Prostate gland (tissue), 2 donors: ENCODE measurements at regions of chr2 and their contacts with region 1.

Region 1: GRCh38 chr2:197499594-197500526 is at the starts of genes HSPD1 and HSPE1:
- DNase-seq: peak; percentile 98
- H3K4me3 ChIP-seq: peak within 1 kb of the TSS; percentile 85 to 93
- H3K27ac ChIP-seq: peak within 1 kb of the TSS; percentile 99 to 100
- H3K4me1 ChIP-seq: no peaks in the 10 kb centered on the region
- H3K27me3 ChIP-seq: no peaks in the 10 kb centered on the region
- CTCF ChIP-seq: peak in 2 of 4 experiments; percentile 18 to 47
- POLR2A ChIP-seq: peak; percentile 99
- total RNA-seq, gene HSPD1: 95.5 to 110 TPM
- total RNA-seq, gene HSPE1: 57.0 to 139 TPM

Region 2: GRCh38 chr2:197356136-197356535 is 143.7 kb before region 1 on chr2:
- intact Hi-C with region 1: no loop called
- DNase-seq: no peak
- H3K4me3 ChIP-seq: no peak overlapping the region
- H3K27ac ChIP-seq: no peak overlapping the region
- H3K4me1 ChIP-seq: no peaks in the 10 kb centered on the region
- H3K27me3 ChIP-seq: no peaks in the 10 kb centered on the region
- CTCF ChIP-seq: peak in 1 of 4 experiments; percentile 5
- POLR2A ChIP-seq: no peak

Region 3: GRCh38 chr2:197434541-197435513 is 65.0 kb before region 1 on chr2 and contains the start of gene SF3B1:
- intact Hi-C with region 1: loop called (anchors 2 kb)
- DNase-seq: peak; percentile 98
- H3K4me3 ChIP-seq: peak within 1 kb of the TSS; percentile 83 to 97
- H3K27ac ChIP-seq: peak within 1 kb of the TSS; percentile 96 to 97
- H3K4me1 ChIP-seq: peaks cover 6% of the 10 kb centered on the region
- H3K27me3 ChIP-seq: no peaks in the 10 kb centered on the region
- CTCF ChIP-seq: peak in 2 of 4 experiments; percentile 32 to 45
- POLR2A ChIP-seq: peak; percentile 95
- total RNA-seq, gene SF3B1: 197 to 250 TPM